RWPE1 (cell line): ENCODE measurements at regions of chr2 and their contacts with region 1.

Region 1: GRCh38 chr2:112481050-112481527 is 867 bp upstream of the TTL start:
- DNase-seq: peak; percentile 89
- H3K27ac ChIP-seq: peak overlapping the region; percentile 94
- CTCF ChIP-seq: peak; percentile 92

Region 2: DNA sequence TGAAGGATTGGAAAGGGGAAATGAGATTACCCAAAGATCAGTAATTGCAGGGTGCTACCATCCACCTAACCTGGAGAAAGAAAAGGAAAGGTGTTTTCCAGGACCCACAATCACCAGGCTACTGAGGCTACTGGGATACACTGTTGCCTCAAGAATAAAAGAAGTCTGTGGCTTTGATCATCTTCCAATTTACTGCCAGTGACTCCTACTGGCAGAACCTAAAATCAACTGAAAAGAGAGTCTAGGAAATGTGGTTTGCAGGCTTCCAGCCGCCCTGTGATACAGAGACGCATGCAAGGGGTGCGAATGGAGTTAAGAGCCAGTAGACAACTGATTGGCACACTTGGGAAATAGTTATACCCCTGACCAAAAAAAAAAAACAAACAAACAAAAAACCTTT is 15.7 kb before region 1 on chr2:
- CTCF ChIA-PET with region 1: interaction called, 12 read pairs
- POLR2A ChIA-PET with region 1: no interaction called
- DNase-seq: no peak
- H3K27ac ChIP-seq: no peak overlapping the region
- CTCF ChIP-seq: no peak